Caco-2 (cell line): ENCODE measurements at regions of chr5 and their contacts with region 1.

Region 1: DNA sequence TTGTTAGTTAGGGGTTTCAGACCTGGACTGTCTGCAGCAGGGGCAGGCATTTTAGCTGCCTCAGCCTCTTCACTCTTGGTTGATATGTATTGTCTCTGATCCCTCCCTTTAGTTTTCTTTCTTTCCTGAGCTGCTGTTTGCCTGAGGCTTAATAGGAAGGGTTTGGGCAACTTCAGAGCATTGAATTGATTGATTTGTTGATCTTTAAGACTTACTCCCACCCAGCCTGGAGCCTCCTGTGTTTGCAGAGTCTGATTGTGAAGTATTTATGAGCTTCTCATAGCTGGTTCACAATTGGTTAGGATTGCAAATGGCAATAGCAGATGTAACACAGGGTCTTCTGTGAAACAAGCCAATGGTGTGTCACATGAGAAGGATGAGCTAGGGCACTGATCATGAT is 671.8 kb upstream of the SEMA6A start:
- DNase-seq: peak; percentile 67 to 68
- H3K4me3 ChIP-seq: no peak overlapping the region
- H3K4me3 Mint-ChIP-seq: no peak overlapping the region
- H3K27ac Mint-ChIP-seq: peak overlapping the region; percentile 71
- H3K4me1 ChIP-seq: peaks cover 51% of the 10 kb centered on the region
- H3K4me1 Mint-ChIP-seq: peaks cover 43% of the 10 kb centered on the region
- H3K27me3 ChIP-seq: no peaks in the 10 kb centered on the region
- H3K27me3 Mint-ChIP-seq: no peaks in the 10 kb centered on the region
- CTCF ChIP-seq: no peak

Region 2: GRCh38 chr5:117220730-117221129 is 25.7 kb before region 1 on chr5:
- CTCF ChIA-PET with region 1: no interaction called
- POLR2A ChIA-PET with region 1: no interaction called
- intact Hi-C with region 1: loop called (anchors 1 kb)
- DNase-seq: no peak
- H3K4me3 ChIP-seq: no peak overlapping the region
- H3K4me3 Mint-ChIP-seq: no peak overlapping the region
- H3K27ac Mint-ChIP-seq: peak overlapping the region; percentile 63
- H3K4me1 ChIP-seq: peaks cover 63% of the 10 kb centered on the region
- H3K4me1 Mint-ChIP-seq: peaks cover 39% of the 10 kb centered on the region
- H3K27me3 ChIP-seq: no peaks in the 10 kb centered on the region
- H3K27me3 Mint-ChIP-seq: no peaks in the 10 kb centered on the region
- CTCF ChIP-seq: no peak

Region 3: DNA sequence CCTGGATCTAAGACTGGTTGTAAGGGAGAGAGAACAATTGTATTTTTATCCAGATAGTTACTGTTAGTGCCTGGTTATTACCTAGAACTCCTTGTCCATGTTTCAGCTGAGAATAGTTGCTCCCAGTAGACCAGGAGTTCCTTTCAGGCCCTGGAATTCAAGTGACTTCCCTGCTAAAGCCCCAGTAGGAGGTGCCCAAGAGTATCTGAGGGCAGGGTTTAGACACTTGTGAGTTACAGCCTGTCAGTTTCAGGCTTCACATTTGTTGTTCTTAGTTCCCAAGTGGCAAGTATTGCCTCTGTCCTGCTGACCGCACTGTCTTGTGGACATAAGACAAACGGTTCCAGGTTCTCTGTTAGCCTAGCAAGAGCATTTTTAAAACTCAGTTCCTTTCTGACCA is 72.1 kb after region 1 on chr5:
- CTCF ChIA-PET with region 1: no interaction called
- POLR2A ChIA-PET with region 1: no interaction called
- intact Hi-C with region 1: no loop called
- DNase-seq: no peak
- H3K4me3 ChIP-seq: no peak overlapping the region
- H3K4me3 Mint-ChIP-seq: no peak overlapping the region
- H3K27ac Mint-ChIP-seq: no peak overlapping the region
- H3K4me1 ChIP-seq: no peaks in the 10 kb centered on the region
- H3K4me1 Mint-ChIP-seq: no peaks in the 10 kb centered on the region
- H3K27me3 ChIP-seq: no peaks in the 10 kb centered on the region
- H3K27me3 Mint-ChIP-seq: no peaks in the 10 kb centered on the region
- CTCF ChIP-seq: peak in 1 of 2 experiments; percentile 28